Left ventricle myocardium inferior (tissue), 1 donor: ENCODE measurements at regions of chr14 and their contacts with region 1.

Region 1: GRCh38 chr14:71855399-71856036 is 76.7 kb upstream of the RGS6 start:
- DNase-seq: peak; percentile 57
- H3K4me3 ChIP-seq: no peak overlapping the region
- H3K27ac ChIP-seq: no peak overlapping the region
- H3K4me1 ChIP-seq: peaks cover 6% of the 10 kb centered on the region
- H3K27me3 ChIP-seq: no peaks in the 10 kb centered on the region
- CTCF ChIP-seq: peak; percentile 70

Region 2: GRCh38 chr14:71720978-71721624 is 134.4 kb before region 1 on chr14:
- intact Hi-C with region 1: loop called (anchors 10 kb)
- DNase-seq: no peak
- H3K4me3 ChIP-seq: no peak overlapping the region
- H3K27ac ChIP-seq: no peak overlapping the region
- H3K4me1 ChIP-seq: peaks cover 4% of the 10 kb centered on the region
- H3K27me3 ChIP-seq: no peaks in the 10 kb centered on the region
- CTCF ChIP-seq: peak; percentile 72

Region 3: GRCh38 chr14:71815110-71815509 is 40.4 kb before region 1 on chr14:
- intact Hi-C with region 1: no loop called
- DNase-seq: no peak
- H3K4me3 ChIP-seq: no peak overlapping the region
- H3K27ac ChIP-seq: no peak overlapping the region
- H3K4me1 ChIP-seq: no peaks in the 10 kb centered on the region
- H3K27me3 ChIP-seq: peaks cover 5% of the 10 kb centered on the region
- CTCF ChIP-seq: no peak

Region 4: DNA sequence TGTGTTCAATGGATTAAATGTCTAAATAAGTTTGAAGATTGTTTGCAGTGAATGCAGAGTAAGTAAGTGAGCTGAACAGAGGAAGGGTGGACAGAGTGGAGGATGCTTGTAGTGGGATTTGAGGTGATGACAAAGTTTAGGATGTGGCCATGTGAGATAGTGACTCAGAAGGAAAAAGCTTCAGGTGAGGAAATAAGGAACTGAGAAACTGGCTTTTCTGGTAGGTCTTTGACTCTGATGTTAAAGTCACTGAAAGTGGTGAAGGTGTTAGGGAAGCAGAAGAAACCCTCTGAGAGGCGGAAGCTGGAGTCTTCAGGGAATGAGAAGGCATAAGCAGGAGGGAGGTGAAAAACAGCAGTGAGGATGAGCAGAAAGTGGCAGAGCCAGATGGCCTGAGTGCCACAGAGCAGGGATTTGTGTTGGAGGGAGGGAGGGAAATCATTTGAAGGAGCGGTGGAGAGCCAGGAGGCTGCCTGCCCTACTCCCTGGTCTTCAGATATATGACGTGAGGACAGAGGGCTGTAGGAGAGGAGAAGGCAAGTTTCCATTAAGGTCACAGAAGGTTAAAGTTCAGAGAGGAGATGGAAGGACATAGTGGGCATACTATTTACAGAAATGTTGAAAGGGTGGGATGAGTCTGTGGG is 101.5 kb after region 1 on chr14:
- intact Hi-C with region 1: no loop called
- DNase-seq: no peak
- H3K4me3 ChIP-seq: no peak overlapping the region
- H3K27ac ChIP-seq: no peak overlapping the region
- H3K4me1 ChIP-seq: peaks cover 39% of the 10 kb centered on the region
- H3K27me3 ChIP-seq: no peaks in the 10 kb centered on the region
- CTCF ChIP-seq: no peak